Naive thymus-derived CD4-positive, alpha-beta T cell (primary cell): ENCODE measurements at regions of chr6 and their contacts with region 1.

Region 1: DNA sequence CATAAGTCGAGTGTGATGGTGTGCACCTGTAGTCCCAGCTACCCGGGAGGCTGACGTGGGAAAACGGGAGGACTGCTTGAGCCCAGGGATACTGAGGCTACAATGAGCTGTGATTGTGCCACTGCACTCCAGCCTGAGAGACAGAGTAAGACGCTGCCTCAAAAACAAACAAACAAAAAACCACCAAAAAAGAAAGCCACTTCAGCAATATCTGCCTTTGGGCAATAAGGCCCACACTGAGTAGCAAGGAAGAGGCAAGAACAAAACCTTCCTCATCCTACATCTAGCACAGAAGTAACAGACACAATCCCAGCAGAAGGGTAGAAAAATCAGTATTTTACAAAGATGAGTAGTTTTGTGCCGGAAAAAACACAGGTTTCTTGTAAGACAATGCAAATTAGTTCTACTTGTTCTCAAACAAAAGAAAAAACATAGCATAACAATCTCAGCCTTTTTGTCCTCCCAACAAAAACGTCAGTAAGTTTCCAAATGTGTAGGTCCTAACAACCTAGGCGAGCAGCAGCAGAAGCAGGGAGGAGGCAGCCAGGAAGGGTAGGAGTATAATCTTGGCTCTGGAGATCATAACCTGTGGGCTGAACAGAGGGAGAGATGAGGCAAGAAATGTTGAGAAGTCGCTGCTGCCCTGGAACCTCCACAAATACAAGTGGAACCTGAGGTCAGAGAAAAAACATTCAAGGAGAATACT is 5.7 kb downstream of the PPP1R10 start:
- DNase-seq: no peak
- ATAC-seq: no peak
- H3K4me3 ChIP-seq: no peak overlapping the region
- H3K4me3 Mint-ChIP-seq: peak overlapping the region in 1 of 10 donors; percentile 14
- H3K27ac ChIP-seq: peak overlapping the region; percentile 93
- H3K27ac Mint-ChIP-seq: peak overlapping the region in 8 of 9 donors; percentile 76 to 100 (median 89)
- H3K4me1 ChIP-seq: peaks cover 20 to 36% of the 10 kb centered on the region in 2 donors
- H3K4me1 Mint-ChIP-seq: peaks cover 42 to 79% (median 73%) of the 10 kb centered on the region in 7 donors
- H3K27me3 ChIP-seq: no peaks in the 10 kb centered on the region
- H3K27me3 Mint-ChIP-seq: peaks cover 0 to 3% (median 0%) of the 10 kb centered on the region in 5 donors

Region 2: DNA sequence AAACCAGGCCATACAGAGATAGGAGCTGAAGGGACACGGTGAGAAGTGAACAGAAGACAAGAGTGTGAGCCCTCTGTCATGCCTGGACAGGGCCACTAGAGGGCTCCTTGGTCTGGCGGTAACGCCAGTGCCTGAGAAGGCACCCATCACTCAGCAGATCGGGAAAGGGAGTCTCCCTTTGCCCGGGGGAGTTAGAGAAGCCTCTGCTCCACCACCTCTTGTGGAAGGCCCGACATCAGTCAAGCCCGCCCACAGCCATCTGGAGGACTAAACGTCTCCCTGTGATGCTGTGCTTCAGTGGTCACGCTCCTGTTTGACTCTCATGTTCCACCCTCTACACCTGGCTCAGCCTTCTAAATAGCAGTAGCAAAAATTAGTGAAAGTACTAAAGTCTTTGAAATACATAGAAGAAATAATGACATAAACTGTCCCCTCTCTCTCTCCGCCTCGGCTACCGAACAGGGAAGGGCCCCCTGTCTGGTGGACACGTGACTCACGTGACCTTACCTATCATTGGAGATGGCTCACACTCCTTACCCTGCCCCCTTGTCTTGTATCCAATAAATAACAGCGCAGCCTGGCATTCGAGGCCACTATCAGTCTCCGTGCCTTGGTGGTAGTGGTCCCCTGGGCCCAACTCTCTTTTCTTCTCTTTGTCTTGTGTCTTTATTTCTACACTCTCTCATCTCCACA is 199.6 kb before region 1 on chr6:
- CTCF ChIA-PET with region 1: no interaction called
- POLR2A ChIA-PET with region 1: no interaction called
- intact Hi-C with region 1: no loop called
- DNase-seq: peak; percentile 26 to 63 (median 52)
- ATAC-seq: peak; percentile 73
- H3K4me3 ChIP-seq: no peak overlapping the region
- H3K4me3 Mint-ChIP-seq: peak overlapping the region; percentile 2 to 69 (median 52)
- H3K27ac ChIP-seq: no peak overlapping the region
- H3K27ac Mint-ChIP-seq: peak overlapping the region in 2 of 9 donors; percentile 53 to 76
- H3K4me1 ChIP-seq: peaks cover 3 to 5% of the 10 kb centered on the region in 2 donors
- H3K4me1 Mint-ChIP-seq: peaks cover 4 to 11% (median 8%) of the 10 kb centered on the region in 7 donors
- H3K27me3 ChIP-seq: peaks cover 0 to 7% of the 10 kb centered on the region in 2 donors
- H3K27me3 Mint-ChIP-seq: peaks cover 45 to 77% (median 66%) of the 10 kb centered on the region in 5 donors

Region 3: GRCh38 chr6:30600451-30600961 is 10.8 kb before region 1 on chr6:
- CTCF ChIA-PET with region 1: interaction called, 10 read pairs
- POLR2A ChIA-PET with region 1: interaction called, 189 read pairs
- intact Hi-C with region 1: loop called in 1 of 2 experiments (anchors 2 kb)
- DNase-seq: no peak
- ATAC-seq: no peak
- H3K4me3 ChIP-seq: no peak overlapping the region
- H3K4me3 Mint-ChIP-seq: no peak overlapping the region
- H3K27ac ChIP-seq: peak overlapping the region; percentile 47
- H3K27ac Mint-ChIP-seq: peak overlapping the region in 7 of 9 donors; percentile 58 to 85 (median 79)
- H3K4me1 ChIP-seq: peaks cover 3 to 5% of the 10 kb centered on the region in 2 donors
- H3K4me1 Mint-ChIP-seq: peaks cover 16 to 35% (median 25%) of the 10 kb centered on the region in 7 donors
- H3K27me3 ChIP-seq: no peaks in the 10 kb centered on the region
- H3K27me3 Mint-ChIP-seq: no peaks in the 10 kb centered on the region

Region 4: GRCh38 chr6:30800871-30801270 is 189.6 kb after region 1 on chr6:
- CTCF ChIA-PET with region 1: no interaction called
- POLR2A ChIA-PET with region 1: no interaction called
- intact Hi-C with region 1: no loop called
- DNase-seq: no peak
- ATAC-seq: no peak
- H3K4me3 ChIP-seq: no peak overlapping the region
- H3K4me3 Mint-ChIP-seq: no peak overlapping the region
- H3K27ac ChIP-seq: no peak overlapping the region
- H3K27ac Mint-ChIP-seq: peak overlapping the region in 1 of 9 donors; percentile 32
- H3K4me1 ChIP-seq: peaks cover 0 to 7% of the 10 kb centered on the region in 2 donors
- H3K4me1 Mint-ChIP-seq: peaks cover 11 to 43% (median 33%) of the 10 kb centered on the region in 7 donors
- H3K27me3 ChIP-seq: no peaks in the 10 kb centered on the region
- H3K27me3 Mint-ChIP-seq: no peaks in the 10 kb centered on the region

Region 5: GRCh38 chr6:30814136-30815040 is 203.1 kb after region 1 on chr6:
- CTCF ChIA-PET with region 1: no interaction called
- POLR2A ChIA-PET with region 1: no interaction called
- intact Hi-C with region 1: no loop called
- DNase-seq: peak in 2 of 9 donors; percentile 38 to 63
- ATAC-seq: peak; percentile 80
- H3K4me3 ChIP-seq: no peak overlapping the region
- H3K4me3 Mint-ChIP-seq: peak overlapping the region in 9 of 10 donors; percentile 12 to 70 (median 39)
- H3K27ac ChIP-seq: no peak overlapping the region
- H3K27ac Mint-ChIP-seq: peak overlapping the region; percentile 49 to 95 (median 83)
- H3K4me1 ChIP-seq: peaks cover 18 to 40% of the 10 kb centered on the region in 2 donors
- H3K4me1 Mint-ChIP-seq: peaks cover 39 to 85% (median 78%) of the 10 kb centered on the region in 7 donors
- H3K27me3 ChIP-seq: no peaks in the 10 kb centered on the region
- H3K27me3 Mint-ChIP-seq: no peaks in the 10 kb centered on the region

Region 6: GRCh38 chr6:32224696-32225095 is 1613.4 kb after region 1 on chr6:
- CTCF ChIA-PET with region 1: no interaction called
- POLR2A ChIA-PET with region 1: no interaction called
- intact Hi-C with region 1: no loop called
- DNase-seq: no peak
- ATAC-seq: no peak
- H3K4me3 ChIP-seq: no peak overlapping the region
- H3K4me3 Mint-ChIP-seq: no peak overlapping the region
- H3K27ac ChIP-seq: no peak overlapping the region
- H3K27ac Mint-ChIP-seq: peak overlapping the region in 7 of 9 donors; percentile 20 to 73 (median 48)
- H3K4me1 ChIP-seq: peaks cover 0 to 17% of the 10 kb centered on the region in 2 donors
- H3K4me1 Mint-ChIP-seq: peaks cover 5 to 26% (median 17%) of the 10 kb centered on the region in 7 donors
- H3K27me3 ChIP-seq: no peaks in the 10 kb centered on the region
- H3K27me3 Mint-ChIP-seq: peaks cover 0 to 5% (median 0%) of the 10 kb centered on the region in 5 donors